ENCODE measurements at regions of chr11 and their contacts with region 1.

Region 1: GRCh38 chr11:120517390-120517761 is 5.8 kb downstream of the GRIK4 start:
- DNase-seq: no peak
- ATAC-seq: peak in 2 of 4 donors; percentile 36 to 52
- H3K4me3 ChIP-seq: no peak overlapping the region
- H3K27ac ChIP-seq: no peak overlapping the region
- H3K4me1 ChIP-seq: peaks cover 0 to 17% (median 0%) of the 10 kb centered on the region in 12 donors
- H3K27me3 ChIP-seq: peaks cover 0 to 25% (median under 1%) of the 10 kb centered on the region in 9 donors
- CTCF ChIP-seq: no peak
- POLR2A ChIP-seq: no peak

Region 2: DNA sequence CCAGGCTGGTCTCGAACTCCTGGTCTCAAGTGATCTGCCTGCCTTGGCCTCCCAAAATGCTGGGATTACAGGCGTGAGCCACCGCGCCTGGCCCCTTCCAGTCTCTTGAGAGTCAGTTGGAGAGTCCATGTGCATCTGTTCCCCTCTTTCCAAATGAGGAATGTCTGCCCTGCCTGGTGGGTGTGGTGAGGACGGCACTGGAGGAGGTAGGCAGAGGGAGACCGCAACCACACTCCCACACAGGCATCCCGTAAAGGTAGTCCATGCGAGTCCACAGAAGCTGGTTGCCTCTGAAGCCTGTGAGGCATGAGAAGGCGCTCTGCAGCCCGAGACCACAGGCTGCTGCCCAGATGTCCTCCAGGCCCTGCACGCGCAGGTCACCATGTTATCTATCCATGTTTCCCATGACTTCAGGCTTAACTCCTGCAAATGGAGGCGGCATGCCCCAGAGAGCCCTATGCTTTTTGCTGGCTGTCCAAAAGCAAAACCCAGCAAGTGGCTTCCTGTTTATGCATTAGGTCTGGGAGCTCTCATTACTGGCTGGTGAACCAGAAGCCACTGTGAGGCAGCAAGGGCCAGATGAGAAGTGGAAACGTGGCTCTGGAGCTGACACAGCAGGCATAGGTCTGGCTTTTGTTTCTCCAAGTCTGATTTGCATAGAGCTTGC is 37.5 kb after region 1 on chr11:
- intact Hi-C with region 1: loop called in 1 of 10 experiments (anchors 5 kb)
- DNase-seq: no peak
- ATAC-seq: no peak
- H3K4me3 ChIP-seq: no peak overlapping the region
- H3K27ac ChIP-seq: no peak overlapping the region
- H3K4me1 ChIP-seq: peaks cover 0 to 8% (median 0%) of the 10 kb centered on the region in 12 donors
- H3K27me3 ChIP-seq: no peaks in the 10 kb centered on the region
- CTCF ChIP-seq: no peak
- POLR2A ChIP-seq: no peak

Region 3: DNA sequence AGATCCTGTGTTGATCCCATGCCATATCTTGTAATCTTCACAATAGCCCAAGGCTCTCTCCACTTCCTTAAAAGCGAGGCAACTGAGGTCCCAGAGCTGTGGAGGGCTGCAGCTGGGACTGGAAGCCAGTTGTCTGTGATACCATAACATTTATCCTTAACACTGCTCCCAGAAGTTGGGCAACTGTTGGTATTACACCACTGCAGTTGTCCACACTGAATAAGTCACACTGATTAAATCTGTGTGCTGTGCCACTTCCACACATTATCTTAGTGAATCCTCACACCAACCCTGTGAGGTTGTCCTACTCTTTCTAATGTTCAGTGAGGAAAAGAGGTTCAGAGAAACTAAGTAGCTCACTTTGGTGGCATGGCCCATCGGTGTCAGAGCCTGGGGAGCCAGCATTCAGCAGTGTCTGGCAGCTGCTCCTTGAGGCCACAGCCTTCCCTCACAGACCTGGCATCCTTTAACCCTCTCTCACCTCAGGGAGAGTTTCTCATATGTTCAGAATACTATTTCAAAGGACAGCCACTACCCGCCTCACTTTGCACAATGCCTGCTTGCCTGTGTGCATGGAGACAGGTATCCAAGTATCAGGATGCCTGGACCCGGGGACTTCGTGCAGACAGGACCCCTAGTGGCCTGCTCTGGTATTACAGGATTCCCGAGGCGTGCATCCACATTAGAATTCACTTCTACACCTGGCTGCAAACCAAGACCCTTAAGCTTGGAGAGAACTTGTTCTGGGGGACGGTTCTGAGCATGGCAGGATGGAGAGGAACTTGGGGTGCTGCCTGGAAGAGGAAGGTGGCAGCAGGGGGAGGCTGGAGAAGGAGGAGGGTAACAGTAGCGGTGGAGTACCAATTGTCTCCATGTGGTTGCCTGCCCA is 284.7 kb after region 1 on chr11:
- intact Hi-C with region 1: loop called in 8 of 10 experiments (anchors 5 to 10 kb)
- DNase-seq: peak; percentile 42 to 66 (median 44)
- ATAC-seq: peak in 2 of 4 donors; percentile 59
- H3K4me3 ChIP-seq: no peak overlapping the region
- H3K27ac ChIP-seq: no peak overlapping the region
- H3K4me1 ChIP-seq: no peaks in the 10 kb centered on the region
- H3K27me3 ChIP-seq: peaks cover 0 to 22% (median 0%) of the 10 kb centered on the region in 9 donors
- CTCF ChIP-seq: peak; percentile 71 to 93 (median 87)
- POLR2A ChIP-seq: no peak

Region 4: GRCh38 chr11:120863366-120863805 is 346.0 kb after region 1 on chr11:
- intact Hi-C with region 1: no loop called
- DNase-seq: no peak
- ATAC-seq: no peak
- H3K4me3 ChIP-seq: no peak overlapping the region
- H3K27ac ChIP-seq: no peak overlapping the region
- H3K4me1 ChIP-seq: peaks cover 0 to 10% (median 4%) of the 10 kb centered on the region in 12 donors
- H3K27me3 ChIP-seq: peaks cover 0 to 18% (median 5%) of the 10 kb centered on the region in 9 donors
- CTCF ChIP-seq: no peak
- POLR2A ChIP-seq: no peak

Region 5: GRCh38 chr11:121153472-121153871 is 636.1 kb after region 1 on chr11:
- intact Hi-C with region 1: no loop called
- DNase-seq: no peak
- ATAC-seq: no peak
- H3K4me3 ChIP-seq: no peak overlapping the region
- H3K27ac ChIP-seq: no peak overlapping the region
- H3K4me1 ChIP-seq: no peaks in the 10 kb centered on the region
- H3K27me3 ChIP-seq: no peaks in the 10 kb centered on the region
- CTCF ChIP-seq: no peak
- POLR2A ChIP-seq: no peak

Measured in heart left ventricle (tissue), 16 donors.